ENCODE measurements at regions of chr12 and their contacts with region 1.

Region 1: DNA sequence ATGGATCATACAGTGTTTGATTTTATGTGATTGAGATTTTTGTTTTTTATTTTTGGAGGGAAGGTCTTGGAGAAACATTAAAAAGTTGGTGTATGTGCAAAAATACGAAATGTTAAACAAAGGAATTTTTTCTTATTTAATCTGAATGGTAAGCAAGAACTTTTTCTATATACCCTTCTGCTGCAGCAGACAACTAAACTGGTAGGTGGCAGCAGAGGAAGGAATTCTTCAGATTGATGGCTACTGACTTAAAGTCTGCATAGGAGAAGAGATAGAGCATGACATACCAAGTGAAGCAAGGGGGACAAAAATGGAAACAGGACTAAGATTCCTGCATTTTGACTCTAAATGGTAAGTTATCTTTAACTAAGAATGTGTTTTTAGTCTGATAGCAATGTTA is 42.0 kb upstream of the A2ML1 start:
- DNase-seq: no peak
- ATAC-seq: no peak
- H3K4me3 Mint-ChIP-seq: no peak overlapping the region
- H3K27ac Mint-ChIP-seq: no peak overlapping the region
- H3K4me1 Mint-ChIP-seq: no peaks in the 10 kb centered on the region
- H3K27me3 Mint-ChIP-seq: no peaks in the 10 kb centered on the region
- CTCF ChIP-seq: no peak

Region 2: GRCh38 chr12:8541562-8541961 is 238.8 kb before region 1 on chr12:
- CTCF ChIA-PET with region 1: no interaction called
- POLR2A ChIA-PET with region 1: no interaction called
- intact Hi-C with region 1: no loop called
- DNase-seq: no peak
- ATAC-seq: no peak
- H3K4me3 Mint-ChIP-seq: no peak overlapping the region
- H3K27ac Mint-ChIP-seq: no peak overlapping the region
- H3K4me1 Mint-ChIP-seq: no peaks in the 10 kb centered on the region
- H3K27me3 Mint-ChIP-seq: peaks cover 34% of the 10 kb centered on the region
- CTCF ChIP-seq: no peak

Region 3: DNA sequence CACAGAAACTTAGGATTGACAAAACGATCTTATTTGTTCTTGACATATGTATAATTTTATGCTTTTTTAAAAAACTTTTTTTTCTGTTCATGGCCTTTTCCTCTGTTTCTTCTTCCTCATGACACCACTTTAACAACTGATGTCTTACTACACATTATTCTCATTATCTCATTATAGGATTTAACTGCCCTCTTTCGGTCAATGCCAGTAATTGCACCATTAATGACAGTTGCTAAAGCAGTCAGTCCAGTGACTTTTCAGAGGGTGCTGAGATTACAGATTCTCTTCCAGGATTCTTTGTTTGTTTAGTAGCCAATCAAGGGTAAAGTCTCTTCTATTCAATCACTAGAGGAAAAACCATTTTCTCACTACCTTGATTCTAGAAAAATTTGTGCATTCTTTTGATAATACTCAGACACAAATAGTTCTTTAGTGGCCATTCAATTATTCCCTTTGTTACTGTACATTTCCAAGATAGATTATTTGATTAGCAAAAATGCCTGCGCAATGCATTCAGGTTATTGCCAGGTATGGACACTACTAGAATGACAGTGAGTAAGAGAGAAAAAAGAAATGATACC is 259.1 kb after region 1 on chr12:
- CTCF ChIA-PET with region 1: no interaction called
- POLR2A ChIA-PET with region 1: no interaction called
- intact Hi-C with region 1: loop called (anchors 1 kb)
- DNase-seq: no peak
- ATAC-seq: peak; percentile 69
- H3K4me3 Mint-ChIP-seq: no peak overlapping the region
- H3K27ac Mint-ChIP-seq: no peak overlapping the region
- H3K4me1 Mint-ChIP-seq: no peaks in the 10 kb centered on the region
- H3K27me3 Mint-ChIP-seq: peaks cover 2% of the 10 kb centered on the region
- CTCF ChIP-seq: peak; percentile 63

Region 4: DNA sequence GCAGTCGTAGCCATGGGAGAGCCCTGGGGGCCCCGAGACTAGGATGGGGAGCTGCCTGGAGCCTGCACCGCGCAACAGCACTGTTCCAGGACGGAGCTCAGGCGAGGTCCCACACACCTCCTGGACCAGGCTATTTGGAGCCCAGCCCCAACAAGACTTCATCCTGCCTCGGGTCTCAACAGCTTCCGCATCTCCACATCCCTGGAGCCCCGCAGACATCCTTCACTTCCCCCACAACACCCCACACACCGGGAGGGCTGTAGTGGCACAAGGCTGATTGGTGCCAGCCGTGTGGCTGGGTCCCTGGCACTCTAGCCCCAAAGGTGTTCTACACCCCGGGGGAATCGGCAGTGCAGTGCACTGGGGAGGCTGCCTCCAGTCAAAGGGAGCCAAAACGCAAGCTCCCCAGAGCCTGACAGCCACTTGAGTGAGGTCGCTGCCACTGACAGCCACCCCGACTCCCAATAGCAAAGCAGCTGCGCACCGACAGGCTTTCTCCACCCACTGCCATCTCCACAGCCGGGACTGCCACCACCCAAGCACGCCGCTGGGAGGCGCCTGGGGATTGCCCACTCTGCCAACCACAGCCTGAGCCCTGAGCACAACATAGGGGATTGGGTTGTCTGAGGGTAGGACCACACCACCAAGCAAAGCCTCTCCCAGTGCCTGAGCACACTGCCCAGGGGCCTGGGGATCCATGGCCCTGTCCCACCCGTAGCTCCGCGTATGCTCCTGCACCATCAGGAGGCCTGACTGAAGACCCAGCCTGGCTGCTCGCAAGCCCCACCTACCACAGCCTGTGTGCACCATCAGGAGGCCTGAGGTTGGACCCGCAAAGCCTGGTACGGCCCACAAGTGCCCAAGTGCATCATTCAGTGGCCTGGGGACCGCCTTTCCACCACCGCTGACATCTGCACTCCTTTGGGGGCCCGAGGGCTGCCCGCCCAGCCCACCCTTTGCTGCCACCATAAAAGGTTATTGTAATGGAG is 1033.7 kb after region 1 on chr12:
- CTCF ChIA-PET with region 1: no interaction called
- POLR2A ChIA-PET with region 1: no interaction called
- intact Hi-C with region 1: no loop called
- DNase-seq: peak; percentile 80
- ATAC-seq: peak; percentile 97
- H3K4me3 Mint-ChIP-seq: peak overlapping the region; percentile 73
- H3K27ac Mint-ChIP-seq: no peak overlapping the region
- H3K4me1 Mint-ChIP-seq: peaks cover 20% of the 10 kb centered on the region
- H3K27me3 Mint-ChIP-seq: peaks cover 18% of the 10 kb centered on the region
- CTCF ChIP-seq: peak; percentile 47